HEK293T (cell line): ENCODE measurements at regions of chr6 and their contacts with region 1.

Region 1: GRCh38 chr6:109095027-109095834 is at the start of gene CEP57L1:
- DNase-seq: peak; percentile 92

Region 2: DNA sequence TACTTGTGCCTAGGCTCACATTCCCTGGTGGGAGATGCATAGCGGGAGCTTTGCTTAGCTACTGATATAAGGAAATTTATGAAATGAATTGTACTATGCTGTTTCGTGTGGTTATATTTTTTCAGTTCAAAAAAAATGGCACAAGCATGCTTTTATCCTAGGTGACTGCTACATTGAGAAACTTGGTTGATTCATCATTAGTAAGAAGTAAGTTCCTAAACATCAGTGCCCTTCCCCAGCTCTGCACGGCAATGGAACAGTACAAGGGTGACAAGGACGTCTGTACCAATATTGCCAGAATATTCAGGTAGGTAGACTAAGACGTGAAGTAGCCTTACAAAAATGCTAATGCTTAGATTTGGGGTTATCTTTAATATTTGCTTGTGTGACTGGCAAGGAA is 167.3 kb before region 1 on chr6:
- CTCF ChIA-PET with region 1: no interaction called
- POLR2A ChIA-PET with region 1: no interaction called
- DNase-seq: no peak

Region 3: DNA sequence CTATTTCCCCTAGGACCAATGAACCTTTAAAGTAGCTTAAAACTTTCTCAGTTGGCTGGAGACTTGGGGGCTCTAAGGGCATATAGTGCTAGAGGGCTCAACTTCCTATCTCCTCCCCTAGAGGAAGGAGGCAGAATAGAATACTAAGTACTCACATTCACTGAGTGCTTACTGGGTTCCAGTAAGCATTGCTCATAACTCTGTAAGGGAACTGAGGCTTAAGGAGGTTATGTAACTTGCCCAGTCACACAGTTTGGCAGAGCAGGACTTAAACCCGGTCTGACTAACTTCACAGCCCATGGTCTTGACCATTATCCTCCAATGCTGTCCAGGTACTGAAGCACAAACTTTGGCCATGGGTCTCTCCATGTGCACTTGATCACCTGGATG is 13.0 kb before region 1 on chr6:
- CTCF ChIA-PET with region 1: interaction called, 11 read pairs
- POLR2A ChIA-PET with region 1: interaction called, 11 read pairs
- DNase-seq: peak; percentile 23

Region 4: DNA sequence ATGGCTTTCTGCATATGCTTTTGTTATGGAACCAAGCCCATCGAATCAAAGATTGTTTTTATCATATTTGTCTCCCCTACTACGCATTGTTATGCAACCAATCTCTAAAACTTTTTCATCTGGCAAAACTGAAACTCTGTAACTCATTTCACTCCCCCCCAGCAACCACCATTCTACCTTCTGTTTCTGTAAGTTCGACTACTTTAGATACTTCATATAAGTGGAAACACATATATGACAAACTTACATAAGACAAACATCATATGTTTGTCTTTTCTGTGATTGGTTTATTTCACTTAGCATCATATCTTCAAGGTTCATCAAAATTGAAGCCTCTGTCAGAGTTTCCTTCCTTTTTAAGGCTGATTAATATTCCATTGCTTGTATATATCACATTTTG is 34.8 kb after region 1 on chr6:
- CTCF ChIA-PET with region 1: no interaction called
- POLR2A ChIA-PET with region 1: no interaction called
- DNase-seq: no peak